ENCODE measurements at regions of chr7 and their contacts with region 1.

Region 1: DNA sequence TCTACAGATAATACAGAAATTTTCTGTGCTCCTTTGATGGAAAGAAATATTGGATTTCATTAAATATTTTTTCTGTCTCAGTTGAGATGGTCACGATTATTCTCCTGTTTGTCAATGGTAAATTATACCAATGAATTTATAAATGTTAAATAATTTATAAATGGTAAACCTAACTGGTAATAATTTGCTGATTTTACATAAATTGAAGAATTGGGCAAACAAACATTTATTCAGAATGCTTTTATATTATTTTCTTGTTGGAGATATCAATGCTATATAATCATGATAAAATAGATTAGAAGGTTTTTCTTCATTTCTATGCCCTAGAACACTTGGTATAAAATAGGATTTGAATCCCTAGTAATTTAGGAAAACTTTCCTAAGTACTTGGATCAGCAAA is 597.6 kb upstream of the IGFBP3 start:
- DNase-seq: no peak
- ATAC-seq: no peak
- H3K4me3 Mint-ChIP-seq: no peak overlapping the region
- H3K27ac Mint-ChIP-seq: no peak overlapping the region
- H3K4me1 Mint-ChIP-seq: no peaks in the 10 kb centered on the region
- H3K27me3 Mint-ChIP-seq: no peaks in the 10 kb centered on the region

Region 2: DNA sequence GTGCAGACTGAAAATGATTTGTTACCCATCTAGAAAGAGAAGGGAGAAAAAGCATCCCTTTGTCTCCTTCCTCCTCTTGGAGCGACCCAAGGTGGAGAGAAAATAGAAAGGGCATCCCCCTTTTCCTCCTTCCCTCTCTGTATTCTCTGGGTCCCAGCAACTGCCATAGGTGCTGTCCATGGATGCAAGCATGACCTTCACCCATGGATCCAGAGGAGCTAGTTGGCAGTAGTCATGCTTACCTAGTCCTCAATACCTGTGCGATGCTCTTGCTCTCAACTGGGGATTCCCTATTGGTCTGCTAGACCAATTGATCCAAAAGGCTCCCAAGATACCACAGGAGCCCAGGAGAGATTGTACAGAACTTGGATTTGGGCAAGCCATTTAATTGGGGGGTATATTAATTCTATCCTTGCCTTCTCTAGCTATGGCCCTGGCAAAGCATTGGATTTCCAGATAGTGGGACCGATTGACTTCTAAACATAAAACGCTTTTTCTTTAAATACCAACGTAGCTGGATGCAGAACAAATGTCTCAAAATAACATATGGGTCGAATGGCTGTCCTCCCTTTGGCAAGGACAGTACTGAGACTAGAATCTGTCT is 49.9 kb before region 1 on chr7:
- CTCF ChIA-PET with region 1: no interaction called
- POLR2A ChIA-PET with region 1: no interaction called
- intact Hi-C with region 1: loop called in 1 of 2 experiments (anchors 1 kb)
- DNase-seq: peak; percentile 23
- ATAC-seq: no peak
- H3K4me3 Mint-ChIP-seq: no peak overlapping the region
- H3K27ac Mint-ChIP-seq: no peak overlapping the region
- H3K4me1 Mint-ChIP-seq: no peaks in the 10 kb centered on the region
- H3K27me3 Mint-ChIP-seq: no peaks in the 10 kb centered on the region